Lower leg skin (tissue), 4 donors: ENCODE measurements at regions of chr18 and their contacts with region 1.

Region 1: GRCh38 chr18:9147440-9148202 is 11.0 kb downstream of the ANKRD12 start:
- DNase-seq: peak in 1 of 2 donors; percentile 31
- H3K4me3 ChIP-seq: no peak overlapping the region
- CTCF ChIP-seq: peak in 1 of 3 donors; percentile 57
- POLR2A ChIP-seq: no peak

Region 2: DNA sequence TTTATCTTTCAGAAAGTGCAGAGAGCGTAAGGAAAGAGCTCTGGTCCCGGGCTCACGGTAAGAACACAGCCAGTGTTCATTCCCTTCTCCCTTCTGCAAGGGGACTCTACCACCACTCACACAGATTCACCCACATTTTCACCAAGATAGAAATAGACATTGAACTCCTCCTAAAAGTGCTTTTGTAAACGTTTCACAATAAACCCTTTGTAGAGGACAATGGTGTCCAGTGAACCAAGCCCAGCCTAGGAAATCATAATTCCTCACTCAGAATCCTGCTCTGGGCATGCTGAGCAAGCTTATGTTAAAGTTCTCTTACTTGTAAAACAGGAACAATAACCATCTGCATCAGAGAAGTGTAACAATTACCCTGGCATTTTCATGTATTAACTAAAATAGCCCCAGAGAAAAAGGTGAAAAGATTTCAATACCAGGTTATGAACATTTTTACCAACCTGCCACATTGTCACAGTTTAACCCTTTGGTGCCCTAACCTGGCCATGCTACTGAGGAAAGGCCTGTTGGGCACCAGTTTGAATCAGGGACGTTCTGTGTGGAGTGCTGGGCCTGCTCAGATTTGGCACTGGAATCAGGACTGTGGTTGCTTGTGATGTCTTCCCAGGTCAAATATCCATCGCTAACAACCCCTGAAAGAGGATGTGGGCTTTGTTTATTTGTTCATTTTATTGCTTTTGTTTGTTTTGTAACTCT is 67.6 kb before region 1 on chr18:
- intact Hi-C with region 1: loop called (anchors 10 kb)
- DNase-seq: no peak
- H3K4me3 ChIP-seq: no peak overlapping the region
- CTCF ChIP-seq: no peak
- POLR2A ChIP-seq: no peak